Activated naive CD4-positive, alpha-beta T cell treated with anti-CD3 and anti-CD28 coated beads for 36 hours (primary cell): ENCODE measurements at regions of chr10 and their contacts with region 1.

Region 1: DNA sequence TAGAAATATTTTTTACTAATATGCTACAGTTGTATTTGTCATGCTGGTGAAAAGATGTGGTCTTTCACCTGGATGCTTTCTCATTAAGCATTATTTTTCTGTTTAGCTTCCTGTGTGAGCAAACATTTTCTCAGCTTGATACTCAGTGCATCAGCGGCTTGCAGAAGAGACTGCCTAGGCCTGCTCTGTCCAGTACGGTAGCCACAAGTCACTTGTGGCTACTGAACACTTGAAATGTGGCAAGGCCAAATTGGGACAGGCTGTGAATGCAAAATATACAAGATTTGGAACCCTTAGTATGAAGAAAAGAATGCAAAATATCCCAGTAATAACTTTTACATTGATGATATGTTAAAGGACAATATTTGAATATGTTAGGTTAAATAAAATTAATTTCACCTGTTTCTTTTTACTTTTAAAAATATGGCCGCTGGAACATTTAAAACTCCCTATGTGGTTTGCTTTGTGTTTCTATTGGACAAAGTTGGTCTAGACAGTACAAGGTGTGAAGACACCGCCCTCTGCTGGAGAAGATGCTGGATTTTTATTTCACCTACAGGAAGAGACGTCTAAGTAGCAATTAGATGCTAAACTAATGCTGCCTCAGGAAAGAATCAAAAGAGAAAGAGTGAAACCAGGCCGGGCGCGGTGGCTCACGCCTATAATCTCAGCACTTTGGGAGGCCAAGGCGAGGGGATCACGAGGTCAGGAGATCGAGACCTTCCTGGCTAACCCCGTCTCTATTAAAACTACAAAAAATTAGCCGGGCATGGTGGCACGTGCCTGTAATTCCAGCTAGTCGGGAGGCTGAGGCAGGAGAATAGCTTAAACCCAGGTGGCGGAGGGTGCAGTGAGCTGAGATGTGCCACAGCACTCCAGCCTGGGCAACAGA is 5.3 kb downstream of the SRGN start:
- DNase-seq: peak; percentile 95
- H3K4me3 Mint-ChIP-seq: peak overlapping the region; percentile 32
- H3K27ac Mint-ChIP-seq: peak overlapping the region; percentile 81
- H3K4me1 Mint-ChIP-seq: peaks cover 52% of the 10 kb centered on the region
- H3K27me3 Mint-ChIP-seq: no peaks in the 10 kb centered on the region

Region 2: GRCh38 chr10:68988530-68989316 is 104.5 kb before region 1 on chr10 and contains the start of gene KIFBP:
- CTCF ChIA-PET with region 1: interaction called, 6 read pairs
- intact Hi-C with region 1: loop called (anchors 1 kb)
- DNase-seq: peak; percentile 94
- H3K4me3 Mint-ChIP-seq: peak within 1 kb of the TSS; percentile 98
- H3K27ac Mint-ChIP-seq: peak within 1 kb of the TSS; percentile 92
- H3K4me1 Mint-ChIP-seq: peaks cover 44% of the 10 kb centered on the region
- H3K27me3 Mint-ChIP-seq: no peaks in the 10 kb centered on the region
- total RNA-seq, gene KIFBP: 10.1 to 10.6 TPM

Region 3: GRCh38 chr10:69065406-69066361 is 27.5 kb before region 1 on chr10:
- CTCF ChIA-PET with region 1: interaction called, 23 read pairs
- intact Hi-C with region 1: no loop called
- DNase-seq: peak; percentile 67
- H3K4me3 Mint-ChIP-seq: peak overlapping the region; percentile 19
- H3K27ac Mint-ChIP-seq: peak overlapping the region; percentile 93
- H3K4me1 Mint-ChIP-seq: peaks cover 39% of the 10 kb centered on the region
- H3K27me3 Mint-ChIP-seq: no peaks in the 10 kb centered on the region

Region 4: DNA sequence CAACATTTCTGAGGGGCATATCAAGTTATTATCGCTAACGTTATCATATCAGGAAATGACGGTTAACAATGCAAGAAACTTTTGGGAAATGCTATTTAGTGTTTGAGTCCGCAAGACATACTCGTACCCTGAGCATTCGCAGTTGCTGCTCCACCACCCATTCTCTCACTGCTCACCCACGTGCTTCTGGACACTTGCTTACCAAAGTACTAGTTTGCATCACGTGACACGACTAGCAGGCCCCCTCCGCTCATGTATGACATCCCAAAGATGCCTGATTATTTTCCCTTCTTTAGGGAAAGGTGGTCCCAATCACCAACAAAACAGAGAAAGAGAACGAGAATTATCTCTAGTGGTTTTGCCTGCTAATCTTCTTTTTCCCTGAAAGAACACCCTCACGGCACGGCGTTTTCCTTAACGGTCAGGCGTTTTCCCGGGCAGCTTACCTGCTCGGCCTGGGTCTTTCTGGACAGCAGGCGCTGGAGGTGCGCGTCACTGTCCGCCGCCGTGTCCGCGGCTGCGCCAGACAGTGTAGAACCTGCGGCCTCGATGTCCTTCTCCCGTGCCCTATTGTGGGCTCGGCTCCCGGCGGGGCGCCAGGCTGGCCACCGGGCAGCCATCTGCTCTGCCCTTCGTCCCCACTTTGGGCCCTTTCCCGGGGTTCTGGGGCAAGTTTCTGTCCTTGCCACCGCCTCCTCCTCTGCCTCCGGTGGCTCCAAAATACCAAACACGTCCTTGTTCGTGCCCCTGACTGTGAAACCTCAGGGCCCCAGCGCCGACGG is 86.7 kb after region 1 on chr10 and contains the start of gene SUPV3L1:
- CTCF ChIA-PET with region 1: interaction called, 3 read pairs
- intact Hi-C with region 1: loop called (anchors 1 kb)
- DNase-seq: peak; percentile 92
- H3K4me3 Mint-ChIP-seq: peak within 1 kb of the TSS; percentile 92
- H3K27ac Mint-ChIP-seq: peak within 1 kb of the TSS; percentile 98
- H3K4me1 Mint-ChIP-seq: peaks cover 32% of the 10 kb centered on the region
- H3K27me3 Mint-ChIP-seq: no peaks in the 10 kb centered on the region
- total RNA-seq, gene SUPV3L1: 38.4 to 41.1 TPM

Region 5: DNA sequence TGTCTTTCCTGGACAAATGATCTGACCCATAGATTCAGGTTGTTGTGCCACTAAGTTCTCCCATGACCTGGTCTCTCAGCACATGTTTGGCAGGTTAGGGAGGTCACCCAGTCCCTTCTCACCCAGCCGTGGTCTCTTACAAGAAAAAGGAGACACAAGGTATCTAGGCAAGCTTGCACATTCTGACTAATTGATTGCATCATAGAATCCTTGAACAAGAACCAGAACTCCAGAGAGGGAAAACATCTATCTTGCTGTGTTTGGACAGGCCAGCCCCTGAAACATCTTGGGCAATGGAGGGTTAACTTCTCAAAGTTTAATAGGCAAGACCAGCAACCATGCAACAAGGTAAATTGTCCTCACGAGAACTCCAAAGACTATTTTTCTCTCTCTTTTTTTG is 176.6 kb after region 1 on chr10:
- CTCF ChIA-PET with region 1: no interaction called
- intact Hi-C with region 1: no loop called
- DNase-seq: no peak
- H3K4me3 Mint-ChIP-seq: no peak overlapping the region
- H3K27ac Mint-ChIP-seq: no peak overlapping the region
- H3K4me1 Mint-ChIP-seq: peaks cover 6% of the 10 kb centered on the region
- H3K27me3 Mint-ChIP-seq: no peaks in the 10 kb centered on the region

Region 6: DNA sequence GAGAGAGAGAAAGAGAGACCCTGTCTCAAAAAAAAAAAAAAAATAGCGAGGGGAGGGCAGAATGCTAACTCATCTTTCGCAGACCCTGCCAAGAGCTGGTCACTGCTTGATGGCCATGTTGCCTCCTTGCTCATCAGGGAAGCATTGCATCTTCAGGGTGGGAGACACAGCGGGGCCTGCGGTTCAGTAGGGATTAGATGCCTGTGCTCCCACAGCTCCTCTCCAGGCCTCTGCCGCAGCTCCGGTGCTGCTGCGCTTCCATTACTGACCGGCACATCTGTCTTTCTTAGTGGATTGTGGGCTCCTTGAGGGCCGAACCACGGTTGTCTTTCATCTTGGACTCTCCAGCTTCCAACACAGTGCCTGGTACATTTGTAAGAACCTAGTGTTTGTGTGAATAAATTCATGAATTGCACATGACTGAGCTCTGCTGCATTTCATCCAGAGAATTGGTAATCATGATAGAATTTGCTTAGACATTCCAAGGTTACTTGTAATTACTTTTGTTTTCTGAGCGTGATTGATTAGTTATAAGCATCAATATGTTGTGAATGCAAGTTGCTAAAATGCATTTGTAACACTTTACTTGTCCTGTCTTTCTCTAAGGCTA is 201.9 kb after region 1 on chr10:
- CTCF ChIA-PET with region 1: no interaction called
- intact Hi-C with region 1: no loop called
- DNase-seq: no peak
- H3K4me3 Mint-ChIP-seq: no peak overlapping the region
- H3K27ac Mint-ChIP-seq: no peak overlapping the region
- H3K4me1 Mint-ChIP-seq: no peaks in the 10 kb centered on the region
- H3K27me3 Mint-ChIP-seq: no peaks in the 10 kb centered on the region

Region 7: DNA sequence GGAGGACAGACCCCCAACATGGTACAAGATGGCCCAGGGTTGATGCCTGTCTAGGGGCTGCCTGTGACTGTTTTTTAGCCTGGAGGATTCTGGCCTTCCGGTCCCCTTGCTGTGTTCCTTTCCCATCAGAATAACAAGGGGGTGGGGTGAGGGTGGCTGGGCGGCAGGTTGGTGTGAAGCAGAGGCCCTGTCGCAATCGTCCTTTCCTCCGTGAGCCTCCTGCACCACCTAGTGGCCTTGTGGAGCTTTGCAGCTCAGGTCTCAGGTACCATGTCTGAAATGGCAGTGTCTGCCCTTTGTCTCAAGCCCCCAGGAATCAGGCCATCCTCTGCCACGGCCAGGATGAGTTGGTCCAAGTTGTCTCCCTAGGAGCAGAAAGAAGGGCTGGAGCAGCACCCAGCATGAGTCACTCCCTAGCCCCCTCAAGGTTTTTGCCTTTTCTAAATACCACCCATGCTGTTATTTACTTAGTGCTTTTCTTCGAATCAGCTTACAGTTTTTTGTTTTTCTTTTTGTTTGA is 299.3 kb after region 1 on chr10:
- CTCF ChIA-PET with region 1: interaction called, 3 read pairs
- intact Hi-C with region 1: loop called (anchors 5 kb)
- DNase-seq: peak; percentile 92
- H3K4me3 Mint-ChIP-seq: no peak overlapping the region
- H3K27ac Mint-ChIP-seq: peak overlapping the region; percentile 76
- H3K4me1 Mint-ChIP-seq: peaks cover 23% of the 10 kb centered on the region
- H3K27me3 Mint-ChIP-seq: no peaks in the 10 kb centered on the region

Region 8: GRCh38 chr10:69425511-69426298 is 332.5 kb after region 1 on chr10:
- CTCF ChIA-PET with region 1: no interaction called
- intact Hi-C with region 1: no loop called
- DNase-seq: peak; percentile 24
- H3K4me3 Mint-ChIP-seq: no peak overlapping the region
- H3K27ac Mint-ChIP-seq: no peak overlapping the region
- H3K4me1 Mint-ChIP-seq: peaks cover 43% of the 10 kb centered on the region
- H3K27me3 Mint-ChIP-seq: no peaks in the 10 kb centered on the region